ENCODE measurements at regions of chr2 and their contacts with region 1.

Region 1: DNA sequence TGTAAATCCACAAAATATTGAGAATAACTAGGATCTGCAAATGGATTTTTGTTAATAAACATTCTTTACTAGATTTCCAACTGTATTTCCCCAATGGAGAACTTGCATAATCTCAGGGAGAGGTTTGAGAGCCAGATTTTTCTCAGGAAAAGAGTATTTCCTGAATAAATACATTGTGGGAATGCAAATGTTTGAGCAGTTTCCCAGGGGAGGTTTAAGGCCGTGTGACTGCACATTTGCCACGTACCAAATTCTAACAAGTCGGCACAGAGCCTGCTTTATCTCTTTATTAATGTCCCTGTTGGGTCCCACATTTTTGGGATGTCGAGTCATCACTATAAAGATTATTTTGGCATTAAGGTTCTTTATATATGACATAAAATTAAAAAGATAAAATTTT is 27.0 kb downstream of the TFPI start:
- DNase-seq: peak; percentile 83
- ATAC-seq: peak; percentile 52
- H3K4me3 ChIP-seq: peak overlapping the region; percentile 3; the same call in 1 of the 2 replicates
- H3K27ac ChIP-seq: peak overlapping the region; percentile 96
- H3K4me1 ChIP-seq: peaks cover 52% of the 10 kb centered on the region
- H3K27me3 ChIP-seq: no peaks in the 10 kb centered on the region
- CTCF ChIP-seq: no peak

Region 2: GRCh38 chr2:187541086-187542085 is 14.1 kb after region 1 on chr2:
- CTCF ChIA-PET with region 1: no interaction called
- POLR2A ChIA-PET with region 1: no interaction called
- intact Hi-C with region 1: loop called (anchors 1 kb)
- DNase-seq: peak; percentile 94
- ATAC-seq: peak; percentile 67
- H3K4me3 ChIP-seq: peak overlapping the region; percentile 28; the same call in 1 of the 2 replicates
- H3K27ac ChIP-seq: peak overlapping the region; percentile 97
- H3K4me1 ChIP-seq: peaks cover 71% of the 10 kb centered on the region
- H3K27me3 ChIP-seq: no peaks in the 10 kb centered on the region
- CTCF ChIP-seq: no peak; the same call in 1 of the 2 replicates

Region 3: DNA sequence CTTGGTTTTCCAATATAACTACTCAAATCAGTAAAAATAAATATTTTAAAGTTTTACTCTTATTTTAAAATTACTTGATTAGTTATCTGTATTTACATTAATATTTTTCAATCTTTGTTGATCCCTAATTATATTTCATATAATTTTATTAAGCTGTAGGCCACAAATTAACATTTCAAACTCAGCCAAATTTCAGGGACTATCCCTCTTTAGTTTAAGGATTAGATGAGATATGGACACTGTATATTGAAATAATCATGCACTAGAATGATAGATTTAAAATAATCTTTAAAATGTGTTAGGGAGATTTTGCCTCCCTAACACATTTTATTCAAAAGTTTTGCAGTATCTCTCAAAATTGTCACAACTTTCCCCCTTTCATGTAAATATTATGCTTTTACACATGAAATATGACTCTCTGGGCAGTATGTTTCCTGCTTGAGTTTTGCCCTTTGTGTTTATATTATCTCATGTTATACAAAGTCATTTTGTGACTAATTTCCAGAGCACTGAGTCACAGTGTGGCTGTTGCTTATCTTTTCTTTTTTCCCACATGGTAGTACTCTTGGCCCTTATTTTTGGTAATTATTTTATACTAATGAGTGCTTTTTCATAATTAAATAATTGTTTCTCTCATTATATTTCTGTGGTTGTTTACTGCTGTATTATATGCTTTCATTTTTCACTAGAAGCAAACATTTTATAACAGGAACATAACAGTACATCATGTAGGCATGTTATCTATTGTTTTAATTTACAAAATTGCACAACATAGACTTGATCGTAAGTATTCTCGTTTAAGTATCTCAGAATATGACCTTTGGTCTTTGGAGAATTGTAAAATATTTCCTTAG is 25.8 kb after region 1 on chr2:
- CTCF ChIA-PET with region 1: no interaction called
- POLR2A ChIA-PET with region 1: interaction called, 3 read pairs
- intact Hi-C with region 1: loop called (anchors 1 kb)
- DNase-seq: peak; percentile 86
- ATAC-seq: peak; percentile 89
- H3K4me3 ChIP-seq: peak overlapping the region; percentile 65
- H3K27ac ChIP-seq: peak overlapping the region; percentile 94
- H3K4me1 ChIP-seq: peaks cover 58% of the 10 kb centered on the region
- H3K27me3 ChIP-seq: no peaks in the 10 kb centered on the region
- CTCF ChIP-seq: no peak

Region 4: DNA sequence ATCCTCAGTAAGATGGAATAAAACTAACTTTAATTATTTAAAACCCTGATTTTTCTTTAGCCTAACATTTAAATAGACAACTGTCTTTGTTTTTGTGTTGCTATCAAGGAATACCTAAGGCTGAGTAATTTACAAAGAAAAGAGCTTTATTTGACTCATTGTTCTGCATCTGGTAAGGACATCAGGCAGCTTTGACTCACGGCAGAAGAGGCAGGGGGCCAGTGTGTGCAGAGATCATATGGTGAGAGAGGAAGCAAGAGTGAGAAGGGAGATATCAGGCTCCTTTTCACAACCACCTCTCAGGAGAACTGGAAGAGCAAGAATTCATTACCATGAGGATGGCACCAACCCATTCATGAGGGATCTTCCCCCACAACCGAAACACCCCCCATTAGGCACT is 91.6 kb after region 1 on chr2:
- CTCF ChIA-PET with region 1: no interaction called
- POLR2A ChIA-PET with region 1: no interaction called
- intact Hi-C with region 1: no loop called
- DNase-seq: no peak
- ATAC-seq: no peak
- H3K4me3 ChIP-seq: no peak overlapping the region
- H3K27ac ChIP-seq: no peak overlapping the region
- H3K4me1 ChIP-seq: no peaks in the 10 kb centered on the region
- H3K27me3 ChIP-seq: no peaks in the 10 kb centered on the region
- CTCF ChIP-seq: no peak

Region 5: DNA sequence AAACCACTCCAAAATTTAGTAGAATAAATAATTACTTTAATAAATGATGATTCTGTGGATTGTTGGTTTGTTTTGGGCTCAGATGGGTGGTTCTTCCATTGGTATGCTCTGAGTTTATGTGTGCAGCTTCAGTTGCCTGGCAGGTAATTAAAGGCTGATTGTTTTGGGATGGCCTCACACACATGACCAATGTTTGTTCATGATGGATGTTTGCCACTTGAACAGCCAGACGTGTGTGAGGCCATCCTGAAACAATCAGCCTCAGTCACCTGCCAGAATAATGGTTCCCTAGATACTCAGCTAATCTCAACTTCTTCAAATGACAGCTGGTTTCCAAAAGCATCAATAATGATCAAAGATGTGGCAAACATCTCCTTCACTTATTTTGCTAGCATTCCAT is 411.9 kb after region 1 on chr2:
- CTCF ChIA-PET with region 1: no interaction called
- POLR2A ChIA-PET with region 1: no interaction called
- intact Hi-C with region 1: no loop called
- DNase-seq: no peak
- ATAC-seq: no peak
- H3K4me3 ChIP-seq: no peak overlapping the region
- H3K27ac ChIP-seq: no peak overlapping the region
- H3K4me1 ChIP-seq: no peaks in the 10 kb centered on the region
- H3K27me3 ChIP-seq: no peaks in the 10 kb centered on the region
- CTCF ChIP-seq: no peak

Measured in PC-3 (cell line).